SK-N-SH (cell line): ENCODE measurements at regions of chr19 and their contacts with region 1.

Region 1: GRCh38 chr19:53849237-53849676 is 18.4 kb upstream of the MYADM start:
- DNase-seq: no peak
- H3K4me3 ChIP-seq: 0 out of 4 replicates have a peak overlapping the region, but pooled peaks of 1 of the 2 experiments have one; percentile 6
- H3K27ac ChIP-seq: peak overlapping the region; percentile 20 to 85; a peak in 3 of 4 replicates
- H3K4me1 ChIP-seq: no peaks in the 10 kb centered on the region
- H3K27me3 ChIP-seq: no peaks in the 10 kb centered on the region
- CTCF ChIP-seq: no peak
- EP300 ChIP-seq: no peak
- RAD21 ChIP-seq: no peak

Region 2: DNA sequence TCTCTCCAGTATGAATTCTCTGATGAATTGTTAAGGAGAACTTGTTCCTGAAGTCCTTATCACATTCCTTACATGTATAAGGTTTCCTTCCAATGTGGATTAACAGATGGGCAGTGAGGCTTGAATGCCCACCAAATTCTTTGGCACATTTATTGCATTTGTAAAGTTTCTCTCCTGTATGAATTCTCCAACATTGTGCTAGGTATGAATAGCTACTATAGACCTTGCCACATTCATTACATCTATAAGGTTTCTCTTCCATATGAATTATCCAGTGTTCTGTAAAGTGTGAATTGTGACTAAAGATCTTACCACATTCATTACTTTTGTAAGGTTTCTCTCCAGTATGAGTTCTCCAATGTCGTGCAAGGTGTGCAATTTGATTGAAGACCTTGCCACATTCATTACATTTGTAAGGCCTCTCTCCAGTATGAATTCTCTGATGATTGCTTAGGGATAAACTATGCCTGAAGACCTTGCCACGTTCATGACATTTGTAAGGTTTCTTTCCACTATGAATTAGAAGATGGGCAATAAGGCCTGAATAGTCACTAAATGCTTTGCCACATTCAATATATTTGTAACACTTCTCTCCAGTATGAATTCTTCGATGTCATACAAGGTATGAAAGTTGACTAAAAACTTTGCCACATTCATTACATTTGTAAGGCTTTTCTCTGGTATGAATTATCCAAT is 1375.5 kb before region 1 on chr19:
- CTCF ChIA-PET with region 1: no interaction called
- POLR2A ChIA-PET with region 1: no interaction called
- DNase-seq: no peak
- H3K4me3 ChIP-seq: no peak overlapping the region
- H3K27ac ChIP-seq: no peak overlapping the region
- H3K4me1 ChIP-seq: no peaks in the 10 kb centered on the region
- H3K27me3 ChIP-seq: no peaks in the 10 kb centered on the region
- CTCF ChIP-seq: no peak
- EP300 ChIP-seq: no peak
- RAD21 ChIP-seq: no peak

Region 3: DNA sequence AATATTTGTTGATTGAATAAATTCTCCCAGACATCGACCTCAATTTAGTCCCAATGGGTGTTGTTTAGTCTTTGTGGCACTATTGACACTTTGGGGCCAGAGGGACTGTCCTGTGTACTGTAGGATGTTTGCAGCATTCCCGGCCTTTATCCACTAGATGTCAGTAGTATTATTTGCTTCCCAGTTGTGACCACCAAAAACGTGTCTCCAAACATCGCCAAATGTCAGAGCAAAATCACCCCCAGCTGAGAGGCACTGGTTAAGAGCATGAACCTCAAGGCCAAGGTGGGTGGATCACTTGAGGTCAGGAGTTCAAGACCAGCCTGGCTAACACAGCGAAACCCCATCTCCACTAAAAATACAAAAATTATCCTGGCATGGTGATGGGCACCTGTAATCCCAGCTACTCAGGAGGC is 40.5 kb before region 1 on chr19:
- CTCF ChIA-PET with region 1: interaction called, 13 read pairs
- POLR2A ChIA-PET with region 1: no interaction called
- DNase-seq: peak; percentile 49
- H3K4me3 ChIP-seq: peak overlapping the region in 1 of 2 experiments; percentile 52; a peak in 1 of 4 replicates
- H3K27ac ChIP-seq: no peak overlapping the region
- H3K4me1 ChIP-seq: no peaks in the 10 kb centered on the region
- H3K27me3 ChIP-seq: peaks cover 39% of the 10 kb centered on the region
- CTCF ChIP-seq: peak; percentile 79
- EP300 ChIP-seq: no peak
- RAD21 ChIP-seq: peak; percentile 79